Gastrocnemius medialis (tissue), 4 donors: ENCODE measurements at regions of chr4 and their contacts with region 1.

Region 1: DNA sequence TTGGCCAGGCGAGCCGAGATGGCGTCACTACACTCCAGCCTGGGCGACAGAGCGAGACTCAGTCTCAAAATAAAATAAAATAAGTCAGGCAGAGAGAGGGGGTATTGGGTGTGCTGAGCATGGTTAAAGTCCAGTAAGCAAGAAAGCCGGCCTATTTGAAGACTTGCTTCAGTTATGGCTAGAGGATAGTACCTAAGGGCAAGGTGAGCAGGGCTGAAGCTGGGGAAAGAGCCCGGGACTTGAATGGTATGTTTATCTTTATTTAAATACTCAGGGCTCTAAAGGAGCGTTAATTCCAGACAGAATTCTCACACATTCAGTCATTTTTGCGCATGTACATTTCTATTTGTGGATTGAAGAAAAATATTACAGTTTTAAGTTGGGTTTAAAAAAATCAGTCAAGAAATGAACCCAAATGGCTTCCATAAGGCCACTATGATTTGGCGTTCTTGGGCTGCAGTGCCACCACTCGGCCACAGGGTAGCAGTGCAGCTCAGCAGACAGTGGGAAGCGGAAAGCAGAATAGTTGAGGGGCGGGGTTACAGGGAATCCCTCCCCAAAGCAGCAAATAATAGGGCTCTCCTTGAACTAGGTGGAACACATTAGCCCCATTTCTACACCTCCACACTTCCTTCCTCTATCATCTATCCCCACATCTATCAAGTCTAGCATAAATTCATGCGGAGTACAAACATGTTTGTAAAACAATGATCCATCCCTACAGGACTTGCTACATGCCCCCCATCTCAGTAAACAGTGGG is 37.2 kb upstream of the SH3D19 start:
- DNase-seq: peak; percentile 56 to 76
- ATAC-seq: peak; percentile 91 to 96
- H3K4me3 ChIP-seq: no peak overlapping the region
- H3K27ac ChIP-seq: peak overlapping the region in 1 of 4 donors; percentile 49
- H3K4me1 ChIP-seq: peaks cover 0 to 7% of the 10 kb centered on the region in 2 donors
- H3K27me3 ChIP-seq: no peaks in the 10 kb centered on the region
- CTCF ChIP-seq: peak; percentile 92 to 99 (median 95)
- POLR2A ChIP-seq: no peak

Region 2: DNA sequence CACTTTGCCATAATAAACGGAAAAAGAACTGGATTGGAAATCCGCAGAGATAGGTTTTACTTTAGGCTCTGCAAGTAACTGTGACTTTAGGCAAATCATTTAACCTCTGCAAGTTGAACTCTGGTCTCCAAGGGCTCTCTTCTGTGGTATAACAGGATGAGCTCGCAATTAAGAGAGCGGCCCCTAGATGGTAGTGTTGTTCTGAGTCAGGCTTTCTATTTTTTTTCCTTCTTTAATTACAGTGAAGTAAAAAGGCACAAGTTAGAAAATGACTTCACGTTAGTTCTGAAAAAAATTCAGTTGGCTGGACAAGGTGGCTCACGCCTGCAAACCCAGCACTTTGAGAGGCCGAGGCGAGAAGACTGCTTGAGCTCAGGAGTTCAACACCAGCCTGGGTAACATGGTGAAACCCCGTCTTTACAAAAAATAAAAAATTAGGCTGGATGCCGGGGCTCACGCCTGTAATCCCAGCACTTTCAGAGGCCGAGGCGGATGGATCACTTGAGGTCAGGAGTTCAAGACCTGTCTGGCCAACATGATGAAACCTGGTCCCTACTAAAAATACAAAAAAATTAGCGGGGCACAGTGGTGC is 245.1 kb before region 1 on chr4:
- in situ Hi-C with region 1: loop called (anchors 10 to 25 kb)
- intact Hi-C with region 1: loop called (anchors 1 kb)
- DNase-seq: peak in 1 of 2 donors; percentile 37
- ATAC-seq: peak; percentile 71 to 85
- H3K4me3 ChIP-seq: no peak overlapping the region
- H3K27ac ChIP-seq: peak overlapping the region in 1 of 4 donors; percentile 28
- H3K4me1 ChIP-seq: no peaks in the 10 kb centered on the region
- H3K27me3 ChIP-seq: no peaks in the 10 kb centered on the region
- CTCF ChIP-seq: peak; percentile 18 to 64 (median 55)
- POLR2A ChIP-seq: no peak

Region 3: DNA sequence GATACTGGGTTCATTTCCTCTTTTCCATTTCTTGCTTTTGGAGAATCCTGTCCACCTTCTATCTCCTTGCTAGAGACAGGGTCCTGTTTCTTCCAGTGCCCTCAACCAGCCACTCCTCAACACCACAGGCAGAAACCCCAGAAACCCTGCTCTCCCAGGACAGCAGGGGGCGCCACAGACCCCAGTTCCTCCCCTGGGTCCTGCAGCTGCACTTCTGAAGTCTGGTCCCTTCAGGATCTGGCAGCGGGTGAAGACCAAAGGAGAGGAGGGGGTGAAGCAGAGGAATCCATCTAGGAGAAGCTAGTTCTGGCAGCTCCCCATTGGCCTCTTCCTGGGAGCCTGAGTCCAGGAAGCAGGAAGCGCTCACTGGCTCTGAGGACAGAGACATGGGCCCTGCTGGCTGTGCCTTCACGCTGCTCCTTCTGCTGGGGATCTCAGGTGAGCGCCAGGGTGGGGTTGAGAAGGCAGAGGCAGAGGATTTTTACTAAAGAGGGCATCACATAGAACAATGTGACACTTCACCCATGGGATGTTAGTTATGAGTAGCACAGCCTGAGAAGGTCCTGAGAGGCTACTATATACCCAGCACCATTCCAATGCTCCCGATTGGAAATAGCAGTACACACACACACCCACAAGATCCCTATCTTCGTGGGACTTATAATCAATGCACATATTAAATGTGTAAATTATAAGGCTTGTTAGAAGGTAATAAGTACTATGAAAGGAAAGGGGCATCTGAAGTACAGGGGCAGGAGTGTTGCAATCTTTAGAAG is 85.6 kb before region 1 on chr4 and contains the start of gene PRSS48:
- in situ Hi-C with region 1: loop called in 1 of 4 experiments (anchors 10 kb)
- intact Hi-C with region 1: loop called (anchors 1 kb)
- DNase-seq: peak; percentile 14 to 48
- ATAC-seq: peak; percentile 81 to 94
- H3K4me3 ChIP-seq: no peak within 1 kb of the TSS
- H3K27ac ChIP-seq: no peak within 1 kb of the TSS
- H3K4me1 ChIP-seq: peaks cover 0 to 11% of the 10 kb centered on the region in 2 donors
- H3K27me3 ChIP-seq: no peaks in the 10 kb centered on the region
- CTCF ChIP-seq: peak; percentile 53 to 76 (median 70)
- POLR2A ChIP-seq: no peak
- total RNA-seq, gene PRSS48: not detected

Region 4: DNA sequence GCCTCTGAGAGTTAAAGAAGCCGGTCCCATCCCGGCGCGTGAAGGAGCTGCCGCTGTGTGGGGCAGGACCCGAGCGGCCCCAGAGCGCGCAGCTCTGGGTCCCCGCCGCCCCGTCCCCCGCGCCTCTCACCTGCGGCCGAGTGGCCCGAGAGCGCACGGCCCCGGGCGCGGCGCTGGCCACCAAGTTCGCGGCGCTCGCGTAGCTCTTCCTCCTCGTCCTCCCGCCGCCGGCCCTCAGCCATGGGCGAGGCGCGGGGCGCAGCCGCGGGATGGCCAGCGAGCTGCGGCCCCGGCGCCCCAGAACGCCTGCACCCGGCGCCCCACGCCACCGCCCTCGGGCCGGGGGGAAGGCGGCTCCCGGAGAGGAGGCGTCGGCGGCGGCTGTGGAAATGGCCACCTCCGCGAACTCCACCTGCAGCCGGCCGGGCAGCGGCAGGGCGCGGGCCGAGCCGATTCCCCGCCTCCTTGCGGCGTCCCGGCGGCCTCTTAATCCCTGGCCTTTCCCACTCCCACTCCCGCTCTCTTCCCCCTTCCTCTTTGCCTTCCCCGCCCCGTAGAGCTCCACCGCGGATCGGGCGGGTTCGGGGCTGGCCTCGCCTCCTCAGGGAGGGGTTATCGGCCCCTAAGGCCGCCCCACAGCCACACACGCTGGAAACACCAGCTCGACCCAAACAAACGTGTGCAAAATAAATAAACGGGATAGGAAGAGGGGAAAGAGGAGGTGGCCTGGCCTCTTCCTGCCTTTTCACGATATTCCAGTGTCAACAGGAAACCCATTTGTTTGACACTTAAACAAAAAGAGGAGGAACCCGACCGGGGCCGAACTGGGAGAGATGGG is 37.3 kb before region 1 on chr4 and contains the start of gene SH3D19:
- in situ Hi-C with region 1: no loop called
- intact Hi-C with region 1: no loop called
- DNase-seq: peak; percentile 40 to 51
- ATAC-seq: peak; percentile 68 to 69
- H3K4me3 ChIP-seq: peak within 1 kb of the TSS; percentile 72 to 96 (median 76)
- H3K27ac ChIP-seq: peak within 1 kb of the TSS; percentile 84 to 94 (median 86)
- H3K4me1 ChIP-seq: peaks cover 25 to 34% of the 10 kb centered on the region in 2 donors
- H3K27me3 ChIP-seq: no peaks in the 10 kb centered on the region
- CTCF ChIP-seq: peak in 1 of 5 experiments; percentile 23
- POLR2A ChIP-seq: peak; percentile 38 to 54
- total RNA-seq, gene SH3D19: 35.6 to 73.1 (median 50.5) TPM

Region 5: DNA sequence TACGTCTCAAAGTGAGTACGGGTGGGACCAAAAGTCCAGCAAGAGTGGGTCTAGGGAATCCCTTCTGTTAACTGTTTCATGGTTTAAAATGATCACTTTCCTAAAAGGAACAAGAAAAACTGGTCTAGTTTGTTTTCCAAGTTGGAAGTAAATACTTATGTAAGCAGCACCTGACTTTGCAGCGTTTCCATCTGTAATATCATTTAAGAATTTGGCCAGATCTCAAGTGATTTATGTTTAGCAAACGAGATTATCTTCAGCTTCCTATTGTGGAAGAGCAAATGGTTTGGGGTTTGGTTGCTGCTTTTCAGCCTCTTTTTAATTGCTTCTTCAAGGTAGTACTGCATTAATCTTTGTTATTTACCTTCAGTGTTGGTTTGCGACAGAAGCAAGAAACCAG is 96.8 kb after region 1 on chr4:
- in situ Hi-C with region 1: no loop called
- intact Hi-C with region 1: loop called (anchors 5 kb)
- DNase-seq: no peak
- ATAC-seq: no peak
- H3K4me3 ChIP-seq: peak overlapping the region in 1 of 4 donors; percentile 4
- H3K27ac ChIP-seq: peak overlapping the region; percentile 50 to 73 (median 70)
- H3K4me1 ChIP-seq: peaks cover 59 to 78% of the 10 kb centered on the region in 2 donors
- H3K27me3 ChIP-seq: no peaks in the 10 kb centered on the region
- CTCF ChIP-seq: no peak
- POLR2A ChIP-seq: no peak

Region 6: DNA sequence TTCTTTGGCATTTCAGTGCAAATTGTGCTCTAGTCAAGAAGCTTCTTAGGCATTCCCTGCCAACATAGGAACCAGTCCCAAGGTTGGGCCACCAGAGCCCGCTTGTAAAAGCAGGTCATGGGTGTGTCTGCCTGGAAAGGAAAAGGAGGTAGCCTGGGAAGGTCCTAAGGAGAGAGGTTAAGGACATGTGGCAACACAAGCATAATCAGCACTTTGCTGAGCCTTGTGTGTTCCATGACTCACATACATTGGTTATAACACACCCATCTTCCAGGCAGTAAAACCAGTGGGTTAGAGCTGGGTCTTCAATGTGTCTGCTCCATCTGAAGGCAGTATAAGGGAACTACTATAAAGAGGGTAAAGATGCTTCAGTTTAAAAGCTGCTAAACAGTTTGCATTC is 211.4 kb after region 1 on chr4:
- in situ Hi-C with region 1: no loop called
- intact Hi-C with region 1: no loop called
- DNase-seq: no peak
- ATAC-seq: peak; percentile 33 to 50
- H3K4me3 ChIP-seq: no peak overlapping the region
- H3K27ac ChIP-seq: peak overlapping the region in 2 of 4 donors; percentile 25 to 66
- H3K4me1 ChIP-seq: peaks cover 11 to 14% of the 10 kb centered on the region in 2 donors
- H3K27me3 ChIP-seq: no peaks in the 10 kb centered on the region
- CTCF ChIP-seq: no peak
- POLR2A ChIP-seq: no peak

Region 7: GRCh38 chr4:151604238-151604637 is 241.7 kb after region 1 on chr4:
- in situ Hi-C with region 1: loop called in 1 of 4 experiments (anchors 25 kb)
- intact Hi-C with region 1: no loop called
- DNase-seq: no peak
- ATAC-seq: peak in 1 of 2 donors; percentile 46
- H3K4me3 ChIP-seq: no peak overlapping the region
- H3K27ac ChIP-seq: peak overlapping the region in 1 of 4 donors; percentile 27
- H3K4me1 ChIP-seq: peaks cover 0 to 8% of the 10 kb centered on the region in 2 donors
- H3K27me3 ChIP-seq: no peaks in the 10 kb centered on the region
- CTCF ChIP-seq: peak in 3 of 5 experiments; percentile 15 to 36 (median 23)
- POLR2A ChIP-seq: no peak

Region 8: GRCh38 chr4:151614561-151614960 is 252.0 kb after region 1 on chr4:
- in situ Hi-C with region 1: loop called in 1 of 4 experiments (anchors 25 kb)
- intact Hi-C with region 1: loop called (anchors 5 kb)
- DNase-seq: no peak
- ATAC-seq: no peak
- H3K4me3 ChIP-seq: no peak overlapping the region
- H3K27ac ChIP-seq: no peak overlapping the region
- H3K4me1 ChIP-seq: peaks cover 17 to 23% of the 10 kb centered on the region in 2 donors
- H3K27me3 ChIP-seq: no peaks in the 10 kb centered on the region
- CTCF ChIP-seq: no peak
- POLR2A ChIP-seq: no peak

Region 9: GRCh38 chr4:151652841-151653547 is 290.4 kb after region 1 on chr4:
- in situ Hi-C with region 1: no loop called
- intact Hi-C with region 1: loop called (anchors 5 kb)
- DNase-seq: peak; percentile 63 to 64
- ATAC-seq: peak; percentile 89 to 90
- H3K4me3 ChIP-seq: no peak overlapping the region
- H3K27ac ChIP-seq: peak overlapping the region; percentile 81 to 86 (median 85)
- H3K4me1 ChIP-seq: peaks cover 26 to 37% of the 10 kb centered on the region in 2 donors
- H3K27me3 ChIP-seq: no peaks in the 10 kb centered on the region
- CTCF ChIP-seq: peak in 1 of 5 experiments; percentile 30
- POLR2A ChIP-seq: no peak

Region 10: DNA sequence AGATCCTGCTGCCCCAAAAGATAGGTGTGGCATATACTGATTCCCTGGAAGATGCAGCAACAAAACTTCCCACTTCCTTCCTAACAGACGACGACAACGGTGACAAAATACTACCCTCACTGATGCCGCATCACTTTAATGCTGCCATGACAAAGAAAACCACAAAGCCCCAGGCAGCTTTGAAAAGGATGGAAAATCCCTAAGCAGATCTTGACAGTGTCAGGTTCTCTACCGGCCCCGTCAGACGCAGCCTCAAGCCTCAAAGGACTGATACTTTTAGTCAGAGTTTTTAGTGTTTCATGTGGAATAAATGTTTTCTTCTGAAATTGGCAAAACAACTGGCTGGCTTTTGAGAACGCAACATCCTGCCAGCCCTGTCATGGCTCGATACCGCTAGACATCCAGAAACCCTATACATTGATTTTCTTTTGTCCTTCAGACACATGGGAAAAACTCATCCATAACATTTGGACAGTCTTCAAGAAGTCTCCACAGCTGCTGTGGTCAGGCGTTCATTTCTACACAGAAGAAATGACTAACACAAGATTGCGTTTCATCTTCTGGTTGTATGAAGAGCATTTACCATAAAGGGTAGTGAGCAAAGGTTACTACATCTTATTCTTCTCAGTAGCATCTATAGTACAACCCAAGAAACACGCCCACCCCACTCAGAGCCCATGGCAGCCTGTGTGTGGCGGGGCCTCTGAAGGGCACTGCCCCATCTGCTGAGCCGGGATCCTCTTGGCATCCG is 338.2 kb after region 1 on chr4:
- in situ Hi-C with region 1: no loop called
- intact Hi-C with region 1: no loop called
- DNase-seq: no peak
- ATAC-seq: no peak
- H3K4me3 ChIP-seq: no peak overlapping the region
- H3K27ac ChIP-seq: no peak overlapping the region
- H3K4me1 ChIP-seq: no peaks in the 10 kb centered on the region
- H3K27me3 ChIP-seq: no peaks in the 10 kb centered on the region
- CTCF ChIP-seq: no peak
- POLR2A ChIP-seq: no peak

Region 11: GRCh38 chr4:153257151-153257620 is 1894.6 kb after region 1 on chr4:
- in situ Hi-C with region 1: no loop called
- intact Hi-C with region 1: no loop called
- DNase-seq: no peak
- ATAC-seq: no peak
- H3K4me3 ChIP-seq: no peak overlapping the region
- H3K27ac ChIP-seq: no peak overlapping the region
- H3K4me1 ChIP-seq: peaks cover 0 to 3% of the 10 kb centered on the region in 2 donors
- H3K27me3 ChIP-seq: no peaks in the 10 kb centered on the region
- CTCF ChIP-seq: no peak
- POLR2A ChIP-seq: no peak